Caco-2 (cell line): ENCODE measurements at regions of chr2 and their contacts with region 1.

Region 1: DNA sequence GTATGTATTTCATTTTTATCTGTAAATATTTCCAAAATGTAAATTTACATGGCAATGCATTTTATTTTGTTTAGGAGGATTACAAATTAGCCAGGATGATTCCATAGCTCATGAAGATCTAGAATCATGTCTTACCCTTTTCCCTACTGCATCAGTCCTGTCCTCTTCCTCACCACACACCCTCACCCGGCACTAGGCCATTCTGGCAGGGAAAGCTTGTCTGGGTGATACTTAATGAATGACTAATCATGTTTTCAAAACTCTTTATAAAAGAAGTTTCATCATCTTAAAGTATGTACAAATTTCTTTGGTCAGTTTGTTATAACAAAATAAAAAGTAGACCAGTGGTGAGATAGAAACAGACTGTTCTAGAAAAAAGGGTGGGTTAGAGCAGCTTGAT is 283.3 kb upstream of the VWC2L start:
- DNase-seq: no peak
- H3K4me3 ChIP-seq: no peak overlapping the region
- H3K4me3 Mint-ChIP-seq: no peak overlapping the region
- H3K27ac Mint-ChIP-seq: no peak overlapping the region
- H3K4me1 ChIP-seq: peaks cover 7% of the 10 kb centered on the region; the same call in 1 of the 2 replicates
- H3K4me1 Mint-ChIP-seq: peaks cover 7% of the 10 kb centered on the region
- H3K27me3 ChIP-seq: no peaks in the 10 kb centered on the region
- H3K27me3 Mint-ChIP-seq: no peaks in the 10 kb centered on the region
- CTCF ChIP-seq: no peak

Region 2: DNA sequence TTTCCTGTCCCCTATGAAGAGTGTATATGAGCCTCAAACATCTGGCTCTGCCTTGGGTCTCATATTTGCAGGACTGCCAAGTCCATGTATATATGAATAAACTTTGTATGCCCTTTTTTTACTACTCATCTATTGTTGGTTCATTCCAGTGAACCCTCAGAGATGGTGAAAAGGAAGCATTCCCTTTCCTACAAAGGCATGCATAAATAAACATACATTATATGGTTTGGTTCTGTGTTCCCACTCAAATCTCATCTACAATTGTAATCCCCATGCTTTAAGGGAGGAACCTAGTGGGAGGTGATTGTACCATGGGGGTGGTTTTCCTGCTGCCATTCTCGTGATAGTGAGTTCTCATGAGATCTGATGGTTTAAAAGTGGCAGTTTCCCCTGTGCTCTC is 309.1 kb before region 1 on chr2:
- CTCF ChIA-PET with region 1: no interaction called
- POLR2A ChIA-PET with region 1: no interaction called
- intact Hi-C with region 1: loop called (anchors 10 kb)
- DNase-seq: no peak
- H3K4me3 ChIP-seq: no peak overlapping the region
- H3K4me3 Mint-ChIP-seq: no peak overlapping the region
- H3K27ac Mint-ChIP-seq: peak overlapping the region; percentile 77
- H3K4me1 ChIP-seq: peaks cover 8% of the 10 kb centered on the region
- H3K4me1 Mint-ChIP-seq: peaks cover 6% of the 10 kb centered on the region
- H3K27me3 ChIP-seq: no peaks in the 10 kb centered on the region
- H3K27me3 Mint-ChIP-seq: no peaks in the 10 kb centered on the region
- CTCF ChIP-seq: no peak

Region 3: GRCh38 chr2:214169736-214170135 is 42.2 kb after region 1 on chr2:
- CTCF ChIA-PET with region 1: no interaction called
- POLR2A ChIA-PET with region 1: no interaction called
- intact Hi-C with region 1: no loop called
- DNase-seq: no peak
- H3K4me3 ChIP-seq: no peak overlapping the region
- H3K4me3 Mint-ChIP-seq: no peak overlapping the region
- H3K27ac Mint-ChIP-seq: no peak overlapping the region
- H3K4me1 ChIP-seq: no peaks in the 10 kb centered on the region
- H3K4me1 Mint-ChIP-seq: no peaks in the 10 kb centered on the region
- H3K27me3 ChIP-seq: no peaks in the 10 kb centered on the region
- H3K27me3 Mint-ChIP-seq: no peaks in the 10 kb centered on the region
- CTCF ChIP-seq: no peak